Activated T-helper 1 cell treated with anti-CD3 and anti-CD28 coated beads, Interleukin-12 subunit alpha, Interleukin-12 subunit beta, Interleukin-2, Interleukin-4 antibody, amounts not matched to agents 30 ng/mL and 10 ng/mL and 1 ng/mL, durations not matched to agents 14 hours and 24 hours and 36 hours (primary cell): ENCODE measurements at regions of chr2 and their contacts with region 1.

Region 1: GRCh38 chr2:37672104-37672869 is 845 bp upstream of the CDC42EP3 start:
- DNase-seq: peak; percentile 59
- H3K4me3 Mint-ChIP-seq: peak overlapping the region; percentile 83
- H3K27ac Mint-ChIP-seq: peak overlapping the region; percentile 67
- H3K4me1 Mint-ChIP-seq: peaks cover 38% of the 10 kb centered on the region
- H3K27me3 Mint-ChIP-seq: peaks cover 8% of the 10 kb centered on the region

Region 2: DNA sequence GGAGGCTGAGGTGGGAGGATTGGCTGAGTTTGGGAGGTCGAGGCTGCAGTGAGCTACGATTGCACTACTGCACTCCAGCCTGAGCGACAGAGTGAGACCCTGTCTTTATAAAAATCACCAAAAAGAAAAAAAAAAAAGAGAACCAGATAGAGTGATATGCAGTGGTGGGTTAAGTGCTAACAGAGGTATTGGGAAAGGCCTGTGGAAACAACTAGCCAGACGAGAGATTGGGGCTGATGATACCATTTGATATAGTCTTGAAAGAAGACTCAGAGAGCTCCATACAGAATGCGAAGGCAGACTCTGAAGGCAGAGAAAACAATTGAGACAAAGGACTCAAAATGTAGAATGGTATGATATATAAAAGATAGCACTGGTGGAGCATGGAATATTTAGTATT is 135.0 kb before region 1 on chr2:
- intact Hi-C with region 1: loop called (anchors 5 kb)
- DNase-seq: no peak
- H3K4me3 Mint-ChIP-seq: no peak overlapping the region
- H3K27ac Mint-ChIP-seq: no peak overlapping the region
- H3K4me1 Mint-ChIP-seq: no peaks in the 10 kb centered on the region
- H3K27me3 Mint-ChIP-seq: peaks cover 15% of the 10 kb centered on the region

Region 3: GRCh38 chr2:37623971-37624900 is 48.1 kb before region 1 on chr2:
- intact Hi-C with region 1: loop called (anchors 1 kb)
- DNase-seq: no peak
- H3K4me3 Mint-ChIP-seq: peak overlapping the region; percentile 32
- H3K27ac Mint-ChIP-seq: peak overlapping the region; percentile 50
- H3K4me1 Mint-ChIP-seq: peaks cover 41% of the 10 kb centered on the region
- H3K27me3 Mint-ChIP-seq: no peaks in the 10 kb centered on the region

Region 4: DNA sequence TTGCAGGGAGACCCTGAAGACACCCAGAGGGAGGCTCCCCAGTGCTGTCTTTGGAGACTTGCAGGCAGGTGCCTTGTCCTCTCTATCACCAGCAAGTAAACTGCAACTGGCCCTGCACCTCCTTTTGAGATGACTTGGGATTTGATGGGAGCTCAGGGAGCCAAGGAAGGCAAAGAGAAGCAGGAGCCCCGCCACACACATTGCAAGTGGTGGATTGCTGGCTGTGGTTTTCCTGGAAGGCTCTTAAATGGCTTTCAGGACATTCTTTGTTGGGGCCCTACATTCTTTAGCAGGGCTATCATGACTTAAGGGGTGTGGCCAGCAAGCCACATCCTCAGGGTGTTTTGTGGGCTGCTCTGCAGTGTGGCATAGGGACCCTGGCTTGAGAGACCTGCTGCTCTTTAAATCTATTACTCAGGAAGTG is 39.0 kb after region 1 on chr2:
- intact Hi-C with region 1: loop called (anchors 2 kb)
- DNase-seq: peak; percentile 30
- H3K4me3 Mint-ChIP-seq: no peak overlapping the region
- H3K27ac Mint-ChIP-seq: no peak overlapping the region
- H3K4me1 Mint-ChIP-seq: peaks cover 44% of the 10 kb centered on the region
- H3K27me3 Mint-ChIP-seq: peaks cover 4% of the 10 kb centered on the region